Activated CD4-positive, alpha-beta memory T cell treated with anti-CD3 and anti-CD28 coated beads, Interleukin-2, amount 10 ng/mL, durations not matched to agents 7 days and 5 days (primary cell): ENCODE measurements at regions of chr17 and their contacts with region 1.

Region 1: GRCh38 chr17:28726226-28727130 is at the start of gene TLCD1:
- DNase-seq: peak; percentile 93
- H3K4me3 Mint-ChIP-seq: peak within 1 kb of the TSS; percentile 95
- H3K27ac Mint-ChIP-seq: peak within 1 kb of the TSS; percentile 98
- H3K4me1 Mint-ChIP-seq: peaks cover 62% of the 10 kb centered on the region
- H3K27me3 Mint-ChIP-seq: no peaks in the 10 kb centered on the region
- total RNA-seq, gene TLCD1: 1.4 to 2.3 TPM

Region 2: DNA sequence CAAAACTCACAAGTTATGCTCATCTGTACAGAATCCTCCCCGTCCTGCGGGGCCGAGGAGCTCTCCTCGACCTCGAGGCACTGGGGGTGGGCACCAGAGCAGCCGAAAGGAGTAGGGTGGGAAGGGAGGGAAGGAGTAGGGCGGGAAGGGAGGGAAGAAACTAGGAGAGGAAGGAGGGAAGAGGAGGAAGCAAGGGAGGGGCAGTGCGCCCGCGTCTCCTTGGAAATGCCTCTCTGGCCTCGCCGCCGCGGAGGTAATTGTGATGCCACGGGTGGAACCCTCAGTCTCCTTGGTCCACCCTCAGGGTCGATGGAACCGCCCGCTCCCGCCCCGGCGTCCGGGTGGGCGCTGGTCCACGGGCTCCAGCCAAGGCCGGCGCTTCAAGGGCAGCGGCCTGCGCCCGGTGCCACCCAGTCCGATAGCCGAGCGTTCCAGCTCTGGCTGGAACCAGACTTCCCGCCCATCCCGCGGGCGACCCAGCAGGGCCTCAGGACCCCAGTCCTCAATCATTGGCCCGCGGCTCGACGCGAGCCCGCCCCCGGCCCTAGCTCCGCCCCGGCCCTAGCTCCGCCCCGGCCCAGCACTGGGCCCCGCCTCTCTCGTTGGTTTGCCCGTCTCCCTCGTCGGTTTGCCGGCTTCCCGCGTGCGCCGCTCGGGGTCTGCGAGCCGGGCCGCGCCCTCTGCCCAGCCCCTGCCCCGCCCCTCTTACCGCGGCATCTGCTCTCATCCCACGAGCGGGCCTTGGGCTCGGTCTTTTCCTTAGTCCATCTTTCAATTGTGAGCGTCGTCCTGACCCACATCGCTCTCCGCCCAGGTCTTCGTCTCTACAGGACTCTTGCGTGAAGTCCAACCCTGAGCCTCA is 15.4 kb before region 1 on chr17:
- CTCF ChIA-PET with region 1: interaction called, 34 read pairs
- POLR2A ChIA-PET with region 1: interaction called, 86 read pairs
- DNase-seq: peak; percentile 92
- H3K4me3 Mint-ChIP-seq: peak overlapping the region; percentile 80
- H3K27ac Mint-ChIP-seq: peak overlapping the region; percentile 90
- H3K4me1 Mint-ChIP-seq: peaks cover 22% of the 10 kb centered on the region
- H3K27me3 Mint-ChIP-seq: peaks cover 17% of the 10 kb centered on the region

Region 3: GRCh38 chr17:28783161-28783560 is 56.7 kb after region 1 on chr17:
- CTCF ChIA-PET with region 1: no interaction called
- POLR2A ChIA-PET with region 1: no interaction called
- DNase-seq: no peak
- H3K4me3 Mint-ChIP-seq: no peak overlapping the region
- H3K27ac Mint-ChIP-seq: no peak overlapping the region
- H3K4me1 Mint-ChIP-seq: peaks cover 10% of the 10 kb centered on the region
- H3K27me3 Mint-ChIP-seq: no peaks in the 10 kb centered on the region

Region 4: GRCh38 chr17:28812091-28812747 is 85.7 kb after region 1 on chr17:
- CTCF ChIA-PET with region 1: interaction called, 11 read pairs
- POLR2A ChIA-PET with region 1: interaction called, 6 read pairs
- DNase-seq: peak; percentile 96
- H3K4me3 Mint-ChIP-seq: peak overlapping the region; percentile 73
- H3K27ac Mint-ChIP-seq: peak overlapping the region; percentile 76
- H3K4me1 Mint-ChIP-seq: peaks cover 37% of the 10 kb centered on the region
- H3K27me3 Mint-ChIP-seq: no peaks in the 10 kb centered on the region

Region 5: GRCh38 chr17:28889996-28890395 is 163.5 kb after region 1 on chr17:
- CTCF ChIA-PET with region 1: interaction called, 46 read pairs
- POLR2A ChIA-PET with region 1: interaction called, 24 read pairs
- DNase-seq: no peak
- H3K4me3 Mint-ChIP-seq: no peak overlapping the region
- H3K27ac Mint-ChIP-seq: peak overlapping the region; percentile 47
- H3K4me1 Mint-ChIP-seq: peaks cover 54% of the 10 kb centered on the region
- H3K27me3 Mint-ChIP-seq: no peaks in the 10 kb centered on the region

Region 6: DNA sequence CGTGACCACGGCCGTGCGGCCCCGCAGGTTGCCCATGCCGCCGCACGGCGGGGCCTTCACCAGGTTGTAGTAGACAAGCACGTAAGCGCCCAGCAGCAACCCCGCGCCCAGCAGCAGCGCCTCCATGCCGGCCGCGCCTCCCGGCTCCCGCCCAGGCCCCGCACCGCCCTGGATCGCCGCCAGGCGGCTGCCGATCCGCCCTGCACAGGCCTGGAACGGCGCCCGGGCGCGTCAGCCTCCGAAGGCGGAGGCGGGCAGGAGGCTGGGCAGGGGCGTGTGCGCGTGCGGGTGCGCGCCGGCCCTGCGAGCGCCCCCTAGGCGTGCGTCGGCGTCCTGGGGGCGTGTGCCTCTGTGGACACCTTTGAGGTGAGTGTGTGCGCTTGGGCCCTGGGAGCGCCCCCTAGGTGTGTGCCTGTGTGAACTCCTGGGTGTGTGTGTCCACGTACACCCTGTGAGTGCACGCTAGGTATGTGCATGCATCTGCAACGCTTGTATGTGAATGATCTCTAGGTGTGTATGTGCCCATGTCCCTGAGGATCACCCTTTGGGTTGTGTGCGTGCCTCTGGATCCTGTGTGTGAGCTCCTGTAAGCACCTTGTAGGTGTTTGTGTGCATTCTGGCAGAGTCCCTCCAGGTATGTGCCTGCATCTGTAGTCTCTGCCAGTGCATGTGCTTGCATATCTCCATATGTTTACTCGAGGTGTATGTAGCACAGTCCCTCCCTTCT is 176.5 kb after region 1 on chr17 and contains the start of gene DHRS13:
- CTCF ChIA-PET with region 1: interaction called, 46 read pairs
- POLR2A ChIA-PET with region 1: interaction called, 16 read pairs
- DNase-seq: peak; percentile 94
- H3K4me3 Mint-ChIP-seq: peak within 1 kb of the TSS; percentile 79
- H3K27ac Mint-ChIP-seq: peak within 1 kb of the TSS; percentile 78
- H3K4me1 Mint-ChIP-seq: peaks cover 48% of the 10 kb centered on the region
- H3K27me3 Mint-ChIP-seq: no peaks in the 10 kb centered on the region
- total RNA-seq, gene DHRS13: 25.2 to 25.7 TPM

Region 7: GRCh38 chr17:28925912-28926365 is 199.5 kb after region 1 on chr17:
- CTCF ChIA-PET with region 1: interaction called, 6 read pairs
- POLR2A ChIA-PET with region 1: interaction called, 24 read pairs
- DNase-seq: peak; percentile 59
- H3K4me3 Mint-ChIP-seq: peak overlapping the region; percentile 43
- H3K27ac Mint-ChIP-seq: peak overlapping the region; percentile 78
- H3K4me1 Mint-ChIP-seq: peaks cover 48% of the 10 kb centered on the region
- H3K27me3 Mint-ChIP-seq: no peaks in the 10 kb centered on the region

Region 8: DNA sequence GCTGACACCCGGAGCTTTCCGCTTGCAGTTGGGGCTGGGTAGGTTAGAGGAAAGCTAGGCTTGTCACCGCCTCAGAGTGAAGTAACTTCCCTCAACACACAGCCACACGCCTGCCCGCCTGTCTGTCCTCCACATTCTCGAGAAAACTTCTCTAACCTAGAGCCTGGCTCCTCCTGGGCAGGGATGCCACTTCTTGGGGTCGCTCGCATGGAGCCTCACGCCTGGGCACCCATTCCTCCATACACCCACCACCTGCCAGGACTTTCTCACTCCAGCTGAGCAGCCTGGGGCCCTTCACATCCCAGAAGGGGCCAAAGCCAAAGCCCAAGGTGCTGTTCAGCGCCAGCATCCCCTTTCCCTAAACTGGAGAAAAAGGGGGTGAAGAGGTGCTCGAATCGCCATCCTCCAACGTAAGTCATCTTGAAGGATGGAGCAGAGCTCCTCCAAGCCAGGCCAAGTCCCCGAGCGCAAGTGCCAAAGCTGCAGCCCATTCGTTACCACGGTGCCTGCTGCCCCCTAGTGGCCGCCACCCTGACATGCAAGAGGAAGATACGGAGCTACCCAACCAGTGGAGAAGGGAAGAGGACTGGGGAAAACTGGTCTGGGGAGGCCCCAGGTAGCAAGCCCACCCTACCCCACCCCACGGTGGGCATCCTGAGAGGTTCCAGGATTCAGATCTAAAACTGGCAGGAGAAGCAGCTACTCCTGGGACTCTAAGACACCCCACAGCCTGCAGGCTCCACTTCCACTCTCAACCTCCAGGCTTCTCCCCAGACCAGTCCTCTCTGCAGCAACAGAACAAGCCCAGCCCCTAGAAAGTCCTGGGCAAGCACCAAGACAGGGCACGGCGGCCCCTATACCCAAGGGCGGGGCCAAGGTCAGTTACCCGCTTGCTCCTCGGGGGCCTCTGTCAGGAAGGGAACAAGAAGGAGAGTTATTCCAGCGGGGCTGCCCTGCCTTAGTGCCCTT is 390.6 kb after region 1 on chr17:
- CTCF ChIA-PET with region 1: interaction called, 13 read pairs
- POLR2A ChIA-PET with region 1: interaction called, 3 read pairs
- DNase-seq: peak; percentile 80
- H3K4me3 Mint-ChIP-seq: no peak overlapping the region
- H3K27ac Mint-ChIP-seq: no peak overlapping the region
- H3K4me1 Mint-ChIP-seq: peaks cover 4% of the 10 kb centered on the region
- H3K27me3 Mint-ChIP-seq: no peaks in the 10 kb centered on the region